PC-3 (cell line): ENCODE measurements at regions of chrX and their contacts with region 1.

Region 1: GRCh38 chrX:104922206-104922621 is 298.3 kb downstream of the TEX13A start:
- DNase-seq: peak; percentile 87
- ATAC-seq: peak; percentile 84
- H3K4me3 ChIP-seq: no peak overlapping the region
- H3K27ac ChIP-seq: no peak overlapping the region
- H3K4me1 ChIP-seq: peaks cover 3% of the 10 kb centered on the region; the same call in 1 of the 2 replicates
- H3K27me3 ChIP-seq: no peaks in the 10 kb centered on the region
- CTCF ChIP-seq: peak; percentile 97

Region 2: GRCh38 chrX:104482757-104483156 is 439.5 kb before region 1 on chrX:
- CTCF ChIA-PET with region 1: no interaction called
- POLR2A ChIA-PET with region 1: no interaction called
- intact Hi-C with region 1: loop called (anchors 5 kb)
- DNase-seq: peak; percentile 15
- ATAC-seq: no peak
- H3K4me3 ChIP-seq: no peak overlapping the region
- H3K27ac ChIP-seq: no peak overlapping the region
- H3K4me1 ChIP-seq: no peaks in the 10 kb centered on the region
- H3K27me3 ChIP-seq: no peaks in the 10 kb centered on the region
- CTCF ChIP-seq: peak; percentile 58

Region 3: GRCh38 chrX:104668550-104668949 is 253.7 kb before region 1 on chrX:
- CTCF ChIA-PET with region 1: no interaction called
- POLR2A ChIA-PET with region 1: no interaction called
- intact Hi-C with region 1: loop called (anchors 1 kb)
- DNase-seq: peak; percentile 57
- ATAC-seq: peak; percentile 57; the same call in 1 of the 2 replicates
- H3K4me3 ChIP-seq: no peak overlapping the region
- H3K27ac ChIP-seq: no peak overlapping the region
- H3K4me1 ChIP-seq: no peaks in the 10 kb centered on the region
- H3K27me3 ChIP-seq: no peaks in the 10 kb centered on the region
- CTCF ChIP-seq: peak; percentile 63

Region 4: GRCh38 chrX:104712515-104712914 is 209.7 kb before region 1 on chrX:
- CTCF ChIA-PET with region 1: interaction called, 4 read pairs
- POLR2A ChIA-PET with region 1: no interaction called
- intact Hi-C with region 1: loop called (anchors 1 kb)
- DNase-seq: peak; percentile 40
- ATAC-seq: peak; percentile 54
- H3K4me3 ChIP-seq: no peak overlapping the region
- H3K27ac ChIP-seq: no peak overlapping the region
- H3K4me1 ChIP-seq: peaks cover 15% of the 10 kb centered on the region
- H3K27me3 ChIP-seq: no peaks in the 10 kb centered on the region
- CTCF ChIP-seq: peak; percentile 47

Region 5: GRCh38 chrX:104742345-104742744 is 179.9 kb before region 1 on chrX:
- CTCF ChIA-PET with region 1: no interaction called
- POLR2A ChIA-PET with region 1: no interaction called
- intact Hi-C with region 1: loop called (anchors 10 kb)
- DNase-seq: peak; percentile 88
- ATAC-seq: peak; percentile 91
- H3K4me3 ChIP-seq: peak overlapping the region; percentile 14; the same call in 1 of the 2 replicates
- H3K27ac ChIP-seq: peak overlapping the region; percentile 79
- H3K4me1 ChIP-seq: peaks cover 37% of the 10 kb centered on the region
- H3K27me3 ChIP-seq: no peaks in the 10 kb centered on the region
- CTCF ChIP-seq: no peak